CD8-positive, alpha-beta T cell (primary cell): ENCODE measurements at regions of chr19 and their contacts with region 1.

Region 1: GRCh38 chr19:16185123-16185767 is at the start of gene FAM32A:
- DNase-seq: peak; percentile 98 to 99 (median 98)
- ATAC-seq: peak; percentile 94
- H3K4me3 ChIP-seq: peak within 1 kb of the TSS; percentile 90 to 95
- H3K4me3 Mint-ChIP-seq: peak within 1 kb of the TSS; percentile 99
- H3K27ac ChIP-seq: peak within 1 kb of the TSS; percentile 81 to 87
- H3K27ac Mint-ChIP-seq: peak within 1 kb of the TSS; percentile 95
- H3K4me1 ChIP-seq: peaks cover 19% of the 10 kb centered on the region
- H3K4me1 Mint-ChIP-seq: peaks cover 38% of the 10 kb centered on the region
- H3K27me3 ChIP-seq: no peaks in the 10 kb centered on the region
- H3K27me3 Mint-ChIP-seq: peaks cover 4% of the 10 kb centered on the region
- CTCF ChIP-seq: no peak
- total RNA-seq, gene FAM32A: 59.7 to 60.4 TPM

Region 2: DNA sequence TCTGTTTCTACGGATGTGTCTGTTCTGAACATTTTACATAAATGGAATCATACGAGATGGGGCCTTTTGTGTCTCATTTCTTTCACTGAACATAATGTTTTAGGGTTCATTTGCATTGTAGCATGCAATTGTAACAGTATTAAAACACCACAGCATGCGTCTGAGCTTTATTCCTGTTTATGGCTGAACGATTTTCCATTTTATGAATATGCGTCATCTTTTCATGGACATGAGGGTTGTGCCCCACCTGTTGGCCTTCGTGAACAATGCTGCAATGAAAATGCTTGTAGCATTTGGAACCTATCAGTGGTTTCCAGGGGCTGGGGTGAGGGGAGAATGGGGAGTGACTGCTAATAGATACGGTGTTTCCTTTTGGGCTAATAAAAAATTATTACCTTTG is 374.9 kb before region 1 on chr19:
- CTCF ChIA-PET with region 1: interaction called, 3 read pairs
- POLR2A ChIA-PET with region 1: no interaction called
- intact Hi-C with region 1: loop called in 1 of 2 experiments (anchors 2 kb)
- DNase-seq: no peak
- ATAC-seq: no peak
- H3K4me3 ChIP-seq: no peak overlapping the region
- H3K4me3 Mint-ChIP-seq: no peak overlapping the region
- H3K27ac ChIP-seq: no peak overlapping the region
- H3K27ac Mint-ChIP-seq: no peak overlapping the region
- H3K4me1 ChIP-seq: peaks cover 7% of the 10 kb centered on the region
- H3K4me1 Mint-ChIP-seq: peaks cover 11% of the 10 kb centered on the region
- H3K27me3 ChIP-seq: peaks cover 0 to 4% of the 10 kb centered on the region in 2 experiments
- H3K27me3 Mint-ChIP-seq: peaks cover 15% of the 10 kb centered on the region
- CTCF ChIP-seq: no peak

Region 3: GRCh38 chr19:16062789-16063188 is 122.5 kb before region 1 on chr19:
- CTCF ChIA-PET with region 1: interaction called, 7 read pairs
- POLR2A ChIA-PET with region 1: no interaction called
- intact Hi-C with region 1: loop called (anchors 1 to 5 kb)
- DNase-seq: peak; percentile 51 to 78 (median 66)
- ATAC-seq: peak; percentile 86
- H3K4me3 ChIP-seq: no peak overlapping the region
- H3K4me3 Mint-ChIP-seq: no peak overlapping the region
- H3K27ac ChIP-seq: no peak overlapping the region
- H3K27ac Mint-ChIP-seq: no peak overlapping the region
- H3K4me1 ChIP-seq: peaks cover 26% of the 10 kb centered on the region
- H3K4me1 Mint-ChIP-seq: peaks cover 16% of the 10 kb centered on the region
- H3K27me3 ChIP-seq: no peaks in the 10 kb centered on the region
- H3K27me3 Mint-ChIP-seq: no peaks in the 10 kb centered on the region
- CTCF ChIP-seq: peak; percentile 85

Region 4: GRCh38 chr19:16197622-16198369 is 12.6 kb after region 1 on chr19 and contains the start of gene AP1M1:
- CTCF ChIA-PET with region 1: interaction called, 8 read pairs
- POLR2A ChIA-PET with region 1: interaction called, 14 read pairs
- intact Hi-C with region 1: loop called (anchors 1 kb)
- DNase-seq: peak; percentile 95 to 99 (median 98)
- ATAC-seq: peak; percentile 82
- H3K4me3 ChIP-seq: peak within 1 kb of the TSS; percentile 98 to 99
- H3K4me3 Mint-ChIP-seq: peak within 1 kb of the TSS; percentile 93
- H3K27ac ChIP-seq: peak within 1 kb of the TSS; percentile 87 to 98
- H3K27ac Mint-ChIP-seq: peak within 1 kb of the TSS; percentile 97
- H3K4me1 ChIP-seq: peaks cover 54% of the 10 kb centered on the region
- H3K4me1 Mint-ChIP-seq: peaks cover 49% of the 10 kb centered on the region
- H3K27me3 ChIP-seq: no peaks in the 10 kb centered on the region
- H3K27me3 Mint-ChIP-seq: no peaks in the 10 kb centered on the region
- CTCF ChIP-seq: no peak
- total RNA-seq, gene AP1M1: 76.2 to 83.4 TPM

Region 5: GRCh38 chr19:16371540-16371986 is 186.3 kb after region 1 on chr19:
- CTCF ChIA-PET with region 1: interaction called, 3 read pairs
- POLR2A ChIA-PET with region 1: interaction called, 11 read pairs
- intact Hi-C with region 1: loop called in 1 of 2 experiments (anchors 1 kb)
- DNase-seq: peak; percentile 87 to 97 (median 92)
- ATAC-seq: peak; percentile 41
- H3K4me3 ChIP-seq: peak overlapping the region; percentile 33 to 44
- H3K4me3 Mint-ChIP-seq: no peak overlapping the region
- H3K27ac ChIP-seq: peak overlapping the region; percentile 91 to 95
- H3K27ac Mint-ChIP-seq: no peak overlapping the region
- H3K4me1 ChIP-seq: peaks cover 95% of the 10 kb centered on the region
- H3K4me1 Mint-ChIP-seq: peaks cover 68% of the 10 kb centered on the region
- H3K27me3 ChIP-seq: no peaks in the 10 kb centered on the region
- H3K27me3 Mint-ChIP-seq: no peaks in the 10 kb centered on the region
- CTCF ChIP-seq: no peak